ENCODE measurements at regions of chr4 and their contacts with region 1.

Region 1: GRCh38 chr4:2817701-2818350 is 24.9 kb downstream of the SH3BP2 start:
- DNase-seq: peak in 1 of 2 experiments; percentile 85
- H3K4me3 ChIP-seq: peak overlapping the region; percentile 44 to 89 (median 58)
- H3K27ac ChIP-seq: peak overlapping the region; percentile 45; the same call in 1 of the 2 replicates
- H3K4me1 ChIP-seq: peaks cover 0 to 14% (median 9%) of the 10 kb centered on the region in 4 experiments; a peak in 5 of 7 replicates
- H3K27me3 ChIP-seq: peaks cover 0 to 7% (median 0%) of the 10 kb centered on the region in 4 experiments; a peak in 2 of 7 replicates
- CTCF ChIP-seq: no peak
- EP300 ChIP-seq: no peak; a peak in 1 of 3 replicates
- POLR2A ChIP-seq: peak in 1 of 2 experiments; percentile 47; a peak in 1 of 3 replicates
- RAD21 ChIP-seq: no peak

Region 2: GRCh38 chr4:2755837-2756694 is 61.8 kb before region 1 on chr4 and contains the start of gene TNIP2:
- CTCF ChIA-PET with region 1: interaction called, 4 read pairs
- POLR2A ChIA-PET with region 1: interaction called, 29 read pairs
- DNase-seq: peak in 1 of 2 experiments; percentile 85
- H3K4me3 ChIP-seq: peak within 1 kb of the TSS; percentile 32 to 79 (median 62)
- H3K27ac ChIP-seq: peak within 1 kb of the TSS; percentile 24; the same call in 1 of the 2 replicates
- H3K4me1 ChIP-seq: peaks cover 0 to 9% (median 5%) of the 10 kb centered on the region in 4 experiments; a peak in 5 of 7 replicates
- H3K27me3 ChIP-seq: no peaks in the 10 kb centered on the region; a peak in 1 of 7 replicates
- CTCF ChIP-seq: peak in 2 of 3 experiments; percentile 41 to 53; a peak in 3 of 4 replicates
- EP300 ChIP-seq: no peak
- POLR2A ChIP-seq: peak in 1 of 2 experiments; percentile 67; a peak in 2 of 3 replicates
- RAD21 ChIP-seq: peak in 1 of 2 experiments; percentile 45; a peak in 1 of 4 replicates
- total RNA-seq, gene TNIP2: 36.2 and 37.7 TPM in 2 replicates

Region 3: GRCh38 chr4:2761035-2761923 is 56.5 kb before region 1 on chr4:
- CTCF ChIA-PET with region 1: interaction called, 10 read pairs
- POLR2A ChIA-PET with region 1: interaction called, 29 read pairs
- DNase-seq: no peak
- H3K4me3 ChIP-seq: no peak overlapping the region
- H3K27ac ChIP-seq: no peak overlapping the region
- H3K4me1 ChIP-seq: peaks cover 0 to 4% (median 3%) of the 10 kb centered on the region in 4 experiments; a peak in 4 of 7 replicates
- H3K27me3 ChIP-seq: peaks cover 0 to 2% (median under 1%) of the 10 kb centered on the region in 4 experiments; a peak in 1 of 7 replicates
- CTCF ChIP-seq: no peak
- EP300 ChIP-seq: no peak
- POLR2A ChIP-seq: no peak
- RAD21 ChIP-seq: no peak

Region 4: DNA sequence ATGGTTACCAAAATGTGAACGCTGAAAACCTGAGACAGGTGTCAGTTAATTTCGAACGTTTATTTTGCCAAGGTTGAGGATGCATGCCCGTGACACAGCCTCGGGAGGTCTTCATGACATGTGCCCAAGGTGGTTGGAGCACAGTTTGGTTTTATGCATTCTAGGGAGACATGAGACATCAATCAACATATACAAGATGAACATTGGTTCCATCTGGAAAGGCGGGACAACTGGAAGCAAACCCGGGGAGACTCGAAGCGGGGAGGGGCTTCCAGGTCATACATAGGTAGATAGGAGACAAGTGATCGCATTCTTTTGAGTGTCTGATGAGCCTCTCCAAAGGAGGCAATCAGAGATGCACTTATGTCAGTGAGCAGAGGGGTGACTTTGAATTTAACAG is 35.9 kb before region 1 on chr4:
- CTCF ChIA-PET with region 1: interaction called, 3 read pairs
- POLR2A ChIA-PET with region 1: interaction called, 12 read pairs
- DNase-seq: no peak
- H3K4me3 ChIP-seq: no peak overlapping the region
- H3K27ac ChIP-seq: no peak overlapping the region
- H3K4me1 ChIP-seq: peaks cover 1 to 9% (median 4%) of the 10 kb centered on the region in 4 experiments; a peak in 5 of 7 replicates
- H3K27me3 ChIP-seq: 0 out of 7 replicates have a peak, but pooled peaks cover 0 to 2% (median 0%) of the 10 kb centered on the region in 4 experiments
- CTCF ChIP-seq: no peak
- EP300 ChIP-seq: no peak
- POLR2A ChIP-seq: no peak
- RAD21 ChIP-seq: no peak

Region 5: GRCh38 chr4:2800691-2801596 is 16.9 kb before region 1 on chr4:
- CTCF ChIA-PET with region 1: interaction called, 4 read pairs
- POLR2A ChIA-PET with region 1: interaction called, 48 read pairs
- DNase-seq: peak in 1 of 2 experiments; percentile 80
- H3K4me3 ChIP-seq: no peak overlapping the region; a peak in 1 of 8 replicates
- H3K27ac ChIP-seq: no peak overlapping the region
- H3K4me1 ChIP-seq: peaks cover 0 to 15% (median 10%) of the 10 kb centered on the region in 4 experiments; a peak in 4 of 7 replicates
- H3K27me3 ChIP-seq: no peaks in the 10 kb centered on the region
- CTCF ChIP-seq: no peak
- EP300 ChIP-seq: no peak
- POLR2A ChIP-seq: peak in 1 of 2 experiments; percentile 59; a peak in 1 of 3 replicates
- RAD21 ChIP-seq: no peak

Region 6: GRCh38 chr4:2837904-2838496 is 20.2 kb after region 1 on chr4:
- CTCF ChIA-PET with region 1: interaction called, 4 read pairs
- POLR2A ChIA-PET with region 1: interaction called, 75 read pairs
- DNase-seq: no peak
- H3K4me3 ChIP-seq: no peak overlapping the region
- H3K27ac ChIP-seq: no peak overlapping the region
- H3K4me1 ChIP-seq: peaks cover 2 to 11% (median 6%) of the 10 kb centered on the region in 4 experiments
- H3K27me3 ChIP-seq: no peaks in the 10 kb centered on the region
- CTCF ChIP-seq: no peak
- EP300 ChIP-seq: no peak
- POLR2A ChIP-seq: no peak
- RAD21 ChIP-seq: no peak

Measured in H1 (cell line).